Dorsolateral prefrontal cortex (tissue), 120 donors: ENCODE measurements at regions of chr19 and their contacts with region 1.

Region 1: GRCh38 chr19:4723367-4724187 is at the start of gene DPP9:
- DNase-seq: peak; percentile 92 to 97 (median 96)
- H3K4me3 ChIP-seq: peak within 1 kb of the TSS; percentile 68 to 99 (median 91)
- H3K27ac ChIP-seq: peak within 1 kb of the TSS; percentile 46 to 95 (median 87)
- H3K27me3 ChIP-seq: no peaks in the 10 kb centered on the region
- CTCF ChIP-seq: peak in 51 of 56 donors; percentile 11 to 70 (median 43)
- total RNA-seq, gene DPP9: 24.5 to 54.3 (median 38.1) TPM

Region 2: DNA sequence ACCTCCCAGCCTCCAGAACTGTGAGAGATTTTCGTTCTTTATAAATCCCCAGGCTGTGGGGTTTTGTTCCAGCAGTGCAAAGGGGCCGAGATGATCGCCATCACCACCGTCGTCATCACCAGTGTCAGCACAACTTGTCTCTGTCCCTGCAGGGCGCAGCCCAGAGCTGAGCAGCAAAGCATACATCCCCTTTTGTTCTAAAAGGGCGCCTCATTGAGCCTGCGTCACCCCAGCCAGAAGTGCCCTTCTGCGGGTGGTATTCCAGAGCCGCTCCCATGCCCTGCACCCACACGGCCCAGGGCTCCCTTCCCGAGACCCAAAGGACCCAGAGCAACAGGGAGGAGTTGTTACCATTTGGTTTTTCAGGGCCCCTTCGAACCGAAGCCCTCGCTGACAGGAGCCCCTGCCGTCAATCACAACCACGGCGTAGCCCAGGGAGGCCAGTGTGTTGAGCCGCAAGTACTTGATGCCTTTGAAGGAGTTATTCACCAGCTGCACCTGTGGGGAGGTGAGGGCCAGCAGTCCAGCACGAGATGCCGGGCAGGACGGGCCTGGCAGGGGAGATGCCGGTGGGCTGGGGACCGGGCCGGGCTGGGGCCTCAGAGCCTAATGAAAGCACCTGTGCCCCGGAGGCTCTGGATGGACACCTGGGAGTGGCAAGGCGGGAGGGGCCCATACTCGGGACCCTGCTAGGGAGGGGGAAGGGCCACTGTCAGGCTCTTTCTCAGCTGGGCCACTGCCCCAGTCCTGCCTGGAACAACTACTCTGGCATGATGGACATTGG is 39.1 kb before region 1 on chr19:
- intact Hi-C with region 1: loop called in 1 of 2 experiments (anchors 5 kb)
- DNase-seq: peak in 4 of 10 donors; percentile 26 to 55 (median 30)
- H3K4me3 ChIP-seq: peak overlapping the region in 2 of 59 donors; percentile 9 to 24
- H3K27ac ChIP-seq: peak overlapping the region in 51 of 59 donors; percentile 19 to 96 (median 76)
- H3K27me3 ChIP-seq: no peaks in the 10 kb centered on the region
- CTCF ChIP-seq: no peak

Region 3: GRCh38 chr19:4713384-4713951 is 10.1 kb before region 1 on chr19:
- intact Hi-C with region 1: no loop called
- DNase-seq: peak in 1 of 10 donors; percentile 65
- H3K4me3 ChIP-seq: no peak overlapping the region
- H3K27ac ChIP-seq: peak overlapping the region in 6 of 59 donors; percentile 28 to 66 (median 43)
- H3K27me3 ChIP-seq: no peaks in the 10 kb centered on the region
- CTCF ChIP-seq: no peak

Region 4: GRCh38 chr19:4791170-4792018 is 67.8 kb after region 1 on chr19 and contains the start of gene FEM1A:
- intact Hi-C with region 1: loop called (anchors 2 kb)
- DNase-seq: peak; percentile 99 to 100 (median 100)
- H3K4me3 ChIP-seq: peak within 1 kb of the TSS; percentile 55 to 99 (median 89)
- H3K27ac ChIP-seq: peak within 1 kb of the TSS; percentile 51 to 97 (median 89)
- H3K27me3 ChIP-seq: no peaks in the 10 kb centered on the region
- CTCF ChIP-seq: peak; percentile 93 to 100 (median 99)
- total RNA-seq, gene FEM1A: 12.6 to 24.5 (median 16.8) TPM

Region 5: DNA sequence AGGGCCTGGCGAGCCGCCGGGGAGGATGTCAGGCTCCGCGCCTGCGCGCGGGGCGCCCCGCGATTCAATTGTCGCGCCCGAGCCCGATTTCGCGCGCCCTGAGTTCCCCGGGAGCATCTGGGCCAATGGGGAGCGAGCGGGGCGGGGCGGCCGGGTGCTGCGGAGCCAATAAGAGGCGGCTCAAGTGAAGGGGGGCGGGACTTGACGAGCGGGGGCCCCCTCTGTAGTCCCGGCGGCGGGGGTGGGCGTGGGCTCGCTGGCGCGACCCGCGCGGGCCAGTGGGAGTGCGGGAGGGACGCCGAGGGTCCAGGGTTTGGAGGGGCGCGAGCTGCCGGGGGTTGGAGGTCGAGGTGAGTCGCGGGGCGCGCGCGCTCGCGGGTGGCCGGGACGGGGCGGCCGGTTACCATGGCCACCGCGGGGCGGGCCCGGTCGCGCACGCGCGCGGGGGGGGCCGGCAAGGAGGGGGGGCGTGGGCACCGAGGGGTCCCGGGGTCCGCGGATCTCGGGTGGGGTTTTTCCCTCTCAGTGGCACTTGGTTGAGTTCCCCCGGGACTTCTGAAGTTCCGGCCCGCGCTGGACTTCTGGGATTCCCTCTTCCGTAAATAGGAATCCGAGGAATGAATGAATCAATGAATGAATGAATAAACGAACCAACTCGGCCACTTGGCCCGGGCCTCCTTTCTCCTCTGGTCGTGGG is 186.5 kb after region 1 on chr19:
- intact Hi-C with region 1: loop called in 1 of 2 experiments (anchors 10 kb)
- DNase-seq: peak; percentile 88 to 95 (median 92)
- H3K4me3 ChIP-seq: peak overlapping the region; percentile 41 to 83 (median 71)
- H3K27ac ChIP-seq: peak overlapping the region in 50 of 59 donors; percentile 24 to 89 (median 74)
- H3K27me3 ChIP-seq: peaks cover 0 to 15% (median 0%) of the 10 kb centered on the region in 45 donors
- CTCF ChIP-seq: peak in 2 of 56 donors; percentile 4 to 28